CD14-positive monocyte (primary cell): ENCODE measurements at regions of chr6 and their contacts with region 1.

Region 1: DNA sequence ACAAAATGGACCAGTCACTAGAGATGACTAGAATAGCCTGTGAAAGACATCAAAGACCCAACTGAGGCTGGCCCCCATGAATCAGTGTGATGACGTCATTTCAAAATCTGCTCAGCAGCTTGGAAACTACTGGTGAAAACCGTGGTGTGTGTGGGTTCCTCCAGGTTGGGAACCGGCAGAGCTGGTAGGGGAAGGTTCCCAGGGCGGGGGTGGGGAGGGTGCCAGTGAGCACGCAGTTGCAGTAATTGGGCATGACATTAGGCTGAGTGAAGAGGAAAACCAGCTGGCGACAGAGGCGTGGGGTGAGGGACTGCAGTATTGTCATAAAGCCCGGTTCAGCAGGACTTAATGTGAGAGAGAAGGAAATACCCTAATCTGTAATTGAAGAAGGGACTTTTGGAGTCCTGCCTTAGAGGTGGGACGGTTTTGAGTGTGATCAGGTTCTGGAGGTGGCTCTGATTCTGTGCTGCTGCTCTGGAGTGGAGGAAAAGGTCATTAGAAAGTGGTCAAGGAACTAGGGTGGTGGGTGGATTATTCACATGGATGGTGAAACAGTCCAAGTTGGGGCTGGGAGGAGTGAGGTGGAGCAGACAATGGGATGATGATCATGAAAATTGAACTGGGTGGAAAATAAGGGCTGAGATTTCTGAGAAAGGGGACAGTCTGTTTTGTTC is 52.0 kb upstream of the MTHFD1L start:
- DNase-seq: no peak
- H3K4me3 ChIP-seq: no peak overlapping the region
- H3K4me3 Mint-ChIP-seq: no peak overlapping the region
- H3K27ac ChIP-seq: no peak overlapping the region
- H3K27ac Mint-ChIP-seq: peak overlapping the region in 1 of 7 donors; percentile 33
- H3K4me1 ChIP-seq: no peaks in the 10 kb centered on the region
- H3K4me1 Mint-ChIP-seq: peaks cover 4% of the 10 kb centered on the region
- H3K27me3 ChIP-seq: peaks cover 0 to 2% of the 10 kb centered on the region in 2 donors
- H3K27me3 Mint-ChIP-seq: peaks cover 7 to 16% (median 10%) of the 10 kb centered on the region in 3 donors
- CTCF ChIP-seq: no peak

Region 2: GRCh38 chr6:149934249-149935156 is 879.0 kb before region 1 on chr6:
- intact Hi-C with region 1: loop called in 1 of 2 experiments (anchors 10 kb)
- DNase-seq: peak; percentile 66 to 81 (median 74)
- H3K4me3 ChIP-seq: no peak overlapping the region
- H3K4me3 Mint-ChIP-seq: peak overlapping the region in 1 of 2 donors; percentile 63
- H3K27ac ChIP-seq: no peak overlapping the region
- H3K27ac Mint-ChIP-seq: peak overlapping the region in 5 of 7 donors; percentile 13 to 66 (median 27)
- H3K4me1 ChIP-seq: peaks cover 11 to 17% of the 10 kb centered on the region in 2 donors
- H3K4me1 Mint-ChIP-seq: peaks cover 15% of the 10 kb centered on the region
- H3K27me3 ChIP-seq: peaks cover 69 to 91% of the 10 kb centered on the region in 2 donors
- H3K27me3 Mint-ChIP-seq: peaks cover 73 to 88% (median 74%) of the 10 kb centered on the region in 3 donors
- CTCF ChIP-seq: peak; percentile 84

Region 3: DNA sequence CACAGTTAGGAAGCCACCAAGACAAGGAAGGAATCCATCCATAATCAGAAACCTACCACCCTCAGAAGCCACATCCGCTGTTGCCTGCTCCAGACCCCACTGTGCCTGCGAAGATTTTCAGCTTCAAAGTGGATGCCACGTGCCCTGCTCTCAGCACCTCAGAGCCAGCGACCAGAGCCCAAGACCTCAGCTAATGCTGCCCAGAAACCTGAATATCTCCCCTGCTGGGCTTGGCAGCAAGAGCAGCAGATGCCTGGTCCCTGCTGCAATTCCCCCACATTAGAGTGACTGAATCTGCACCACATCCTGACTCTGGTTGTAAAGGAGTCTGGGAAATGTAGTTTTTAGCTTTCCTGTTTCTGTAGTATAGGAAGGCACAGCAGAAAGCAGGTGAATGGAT is 733.9 kb before region 1 on chr6:
- intact Hi-C with region 1: loop called (anchors 2 to 5 kb)
- DNase-seq: no peak
- H3K4me3 ChIP-seq: no peak overlapping the region
- H3K4me3 Mint-ChIP-seq: no peak overlapping the region
- H3K27ac ChIP-seq: no peak overlapping the region
- H3K27ac Mint-ChIP-seq: no peak overlapping the region
- H3K4me1 ChIP-seq: no peaks in the 10 kb centered on the region
- H3K4me1 Mint-ChIP-seq: no peaks in the 10 kb centered on the region
- H3K27me3 ChIP-seq: peaks cover 3 to 5% of the 10 kb centered on the region in 2 donors
- H3K27me3 Mint-ChIP-seq: peaks cover 8 to 26% (median 23%) of the 10 kb centered on the region in 3 donors
- CTCF ChIP-seq: no peak

Region 4: GRCh38 chr6:150417899-150418826 is 395.3 kb before region 1 on chr6:
- intact Hi-C with region 1: loop called (anchors 10 kb)
- DNase-seq: peak in 2 of 3 donors; percentile 58 to 63
- H3K4me3 ChIP-seq: peak overlapping the region in 1 of 3 experiments; percentile 57
- H3K4me3 Mint-ChIP-seq: peak overlapping the region; percentile 61 to 79
- H3K27ac ChIP-seq: no peak overlapping the region
- H3K27ac Mint-ChIP-seq: peak overlapping the region in 3 of 7 donors; percentile 36 to 42 (median 38)
- H3K4me1 ChIP-seq: peaks cover 10 to 15% of the 10 kb centered on the region in 2 donors
- H3K4me1 Mint-ChIP-seq: peaks cover 17% of the 10 kb centered on the region
- H3K27me3 ChIP-seq: peaks cover 4 to 7% of the 10 kb centered on the region in 2 donors
- H3K27me3 Mint-ChIP-seq: peaks cover 9 to 12% (median 10%) of the 10 kb centered on the region in 3 donors
- CTCF ChIP-seq: peak; percentile 40

Region 5: DNA sequence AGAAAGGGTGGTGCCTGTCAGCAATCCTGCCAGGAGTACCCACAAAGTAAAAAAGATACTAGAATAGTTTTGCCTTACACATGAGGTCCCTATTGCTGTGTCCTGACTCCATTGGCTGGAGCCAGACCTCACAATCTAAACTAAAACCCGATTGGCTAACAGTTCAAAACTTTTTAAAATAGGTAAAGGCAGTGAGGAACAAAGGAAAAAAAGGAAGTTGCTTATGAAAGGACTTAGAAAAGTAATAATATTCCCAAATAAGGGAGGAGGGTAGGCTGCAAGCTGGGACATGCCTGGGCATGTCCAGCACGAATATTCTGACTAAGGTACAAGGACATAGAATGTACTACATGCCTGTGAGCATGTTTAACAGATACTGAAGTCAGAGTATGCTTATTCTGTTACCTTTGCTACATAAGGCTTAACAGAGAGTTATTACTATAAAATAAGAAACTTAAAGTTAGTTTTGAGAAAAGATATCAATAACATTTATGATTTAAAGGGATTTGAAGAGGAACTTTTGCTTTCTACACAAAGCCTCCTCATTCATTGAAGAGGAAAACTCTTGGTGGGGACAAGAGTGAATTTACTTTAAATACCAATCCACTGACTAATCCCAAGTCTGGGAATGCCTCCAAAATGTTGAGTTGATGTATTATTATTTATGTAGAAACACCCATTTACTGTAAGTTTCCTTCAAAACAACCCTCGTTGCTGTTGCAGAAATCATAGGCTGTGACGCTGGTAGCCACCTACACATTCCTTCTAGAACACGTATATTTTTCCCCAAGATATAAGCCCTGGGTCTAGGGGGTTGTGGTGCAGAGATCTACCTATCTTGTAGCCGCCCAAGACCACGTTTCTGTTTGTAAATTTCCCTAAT is 43.8 kb after region 1 on chr6:
- intact Hi-C with region 1: no loop called
- DNase-seq: no peak
- H3K4me3 ChIP-seq: no peak overlapping the region
- H3K4me3 Mint-ChIP-seq: no peak overlapping the region
- H3K27ac ChIP-seq: no peak overlapping the region
- H3K27ac Mint-ChIP-seq: no peak overlapping the region
- H3K4me1 ChIP-seq: peaks cover 8 to 14% of the 10 kb centered on the region in 2 donors
- H3K4me1 Mint-ChIP-seq: peaks cover 21% of the 10 kb centered on the region
- H3K27me3 ChIP-seq: no peaks in the 10 kb centered on the region
- H3K27me3 Mint-ChIP-seq: peaks cover 1 to 11% (median 2%) of the 10 kb centered on the region in 3 donors
- CTCF ChIP-seq: no peak

Region 6: DNA sequence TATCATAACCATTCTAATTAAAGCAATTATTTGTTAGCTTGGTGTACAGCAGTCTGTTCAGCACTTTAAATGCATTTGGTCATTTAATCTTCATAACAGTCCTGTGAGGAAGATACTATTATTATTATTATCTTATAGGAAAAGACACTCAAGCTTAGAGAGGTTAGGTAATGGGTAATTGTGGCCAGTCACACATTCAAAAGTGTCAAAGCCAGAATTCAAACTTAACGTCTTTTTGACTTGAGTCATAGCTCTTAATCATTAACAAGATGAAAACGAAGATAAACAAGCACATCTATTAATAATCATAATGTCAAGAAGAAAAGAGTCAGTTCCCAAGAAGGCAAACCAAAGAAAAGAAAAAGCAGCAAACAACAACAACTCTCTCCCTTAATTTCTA is 1572.7 kb after region 1 on chr6:
- intact Hi-C with region 1: no loop called
- DNase-seq: no peak
- H3K4me3 ChIP-seq: no peak overlapping the region
- H3K4me3 Mint-ChIP-seq: no peak overlapping the region
- H3K27ac ChIP-seq: no peak overlapping the region
- H3K27ac Mint-ChIP-seq: no peak overlapping the region
- H3K4me1 ChIP-seq: no peaks in the 10 kb centered on the region
- H3K4me1 Mint-ChIP-seq: no peaks in the 10 kb centered on the region
- H3K27me3 ChIP-seq: no peaks in the 10 kb centered on the region
- H3K27me3 Mint-ChIP-seq: peaks cover 2 to 4% (median 2%) of the 10 kb centered on the region in 3 donors
- CTCF ChIP-seq: no peak